ENCODE measurements at regions of chr15 and their contacts with region 1.

Region 1: DNA sequence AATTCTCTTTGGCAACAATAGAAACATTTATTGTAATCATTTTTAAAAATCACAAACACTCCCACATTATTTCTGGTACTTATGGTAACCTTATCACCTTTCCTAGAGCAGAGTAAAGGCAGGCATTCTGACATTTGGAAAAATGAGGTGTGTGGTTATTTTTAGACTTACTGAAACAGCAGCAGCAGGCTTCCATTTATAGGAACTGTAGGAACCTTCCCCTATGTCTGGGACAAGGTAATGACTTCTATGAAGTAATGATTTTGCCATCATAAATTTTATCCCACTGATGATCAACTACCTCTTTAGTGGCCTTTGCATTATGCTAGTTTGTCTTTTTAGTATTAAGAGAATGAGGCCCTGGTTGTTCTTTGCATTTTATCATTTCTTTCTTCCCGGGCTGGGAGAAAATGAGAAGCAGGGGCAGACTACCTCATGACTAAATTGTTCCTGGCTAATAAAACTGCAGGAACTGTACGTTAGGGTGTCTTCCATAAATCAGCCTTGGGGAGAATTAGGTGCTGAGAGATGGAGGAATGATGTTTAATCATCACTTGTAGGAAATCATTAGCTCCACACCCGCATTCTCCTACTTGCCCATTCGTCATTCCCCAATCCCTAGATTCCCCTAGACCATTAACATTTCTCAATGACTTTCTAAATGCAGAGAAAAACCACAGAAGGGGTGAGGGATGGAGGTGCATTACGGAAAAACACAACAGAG is 680.3 kb downstream of the AGBL1 start:
- DNase-seq: no peak
- H3K4me3 ChIP-seq: no peak overlapping the region
- CTCF ChIP-seq: no peak
- POLR2A ChIP-seq: no peak

Region 2: DNA sequence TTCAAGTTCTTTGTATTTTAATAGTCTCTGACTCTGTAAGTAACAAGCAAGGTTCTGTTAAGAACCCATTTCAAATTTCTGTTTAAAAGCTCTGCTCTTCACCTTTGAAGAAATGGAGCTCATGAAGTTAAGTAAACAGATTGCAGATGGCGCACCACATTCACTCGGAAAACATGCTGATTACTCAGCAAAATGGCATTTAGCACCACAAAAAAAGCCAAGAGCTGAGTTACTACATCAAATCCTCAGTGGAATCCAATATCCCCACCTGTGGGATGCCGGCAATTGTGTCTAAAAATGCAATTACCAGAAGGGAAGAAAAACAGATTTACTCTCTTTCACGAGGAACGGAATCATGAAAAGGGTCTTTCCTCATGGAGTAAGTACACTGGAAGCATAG is 738.6 kb after region 1 on chr15:
- intact Hi-C with region 1: loop called (anchors 5 kb)
- DNase-seq: no peak
- H3K4me3 ChIP-seq: no peak overlapping the region
- CTCF ChIP-seq: no peak
- POLR2A ChIP-seq: no peak